ENCODE measurements at regions of chr18 and their contacts with region 1.

Region 1: DNA sequence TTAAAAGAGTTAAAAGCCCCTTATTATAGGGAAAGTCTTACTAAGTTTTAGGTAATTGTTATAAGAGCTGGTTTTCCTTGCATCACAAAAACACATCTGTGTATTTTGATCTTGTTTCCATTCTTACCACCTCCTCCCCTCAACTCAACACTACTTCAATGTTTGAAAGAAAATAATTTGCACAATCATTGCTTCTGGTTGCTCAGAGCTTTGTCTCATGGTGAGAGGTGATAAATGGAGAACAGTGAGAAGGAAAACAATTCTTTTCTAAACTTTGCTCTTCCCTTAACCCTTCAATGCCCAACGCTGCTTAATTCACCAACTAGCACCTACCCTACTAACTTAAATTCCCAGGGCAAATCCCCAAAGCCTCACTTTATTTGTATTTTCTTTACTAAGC is 268.1 kb upstream of the LINC00305 start:
- DNase-seq: no peak
- ATAC-seq: no peak
- H3K4me3 ChIP-seq: no peak overlapping the region
- H3K27ac ChIP-seq: no peak overlapping the region
- H3K4me1 ChIP-seq: no peaks in the 10 kb centered on the region
- H3K27me3 ChIP-seq: no peaks in the 10 kb centered on the region
- CTCF ChIP-seq: no peak

Region 2: GRCh38 chr18:64027931-64028695 is 388.9 kb before region 1 on chr18:
- intact Hi-C with region 1: loop called in 1 of 10 experiments (anchors 10 kb)
- DNase-seq: no peak
- ATAC-seq: peak in 6 of 8 donors; percentile 42 to 77 (median 70)
- H3K4me3 ChIP-seq: no peak overlapping the region
- H3K27ac ChIP-seq: peak overlapping the region in 1 of 10 donors; percentile 25
- H3K4me1 ChIP-seq: peaks cover 0 to 4% (median 0%) of the 10 kb centered on the region in 9 donors
- H3K27me3 ChIP-seq: peaks cover 0 to 9% (median 0%) of the 10 kb centered on the region in 7 donors
- CTCF ChIP-seq: no peak

Region 3: GRCh38 chr18:64100116-64100922 is 316.7 kb before region 1 on chr18:
- intact Hi-C with region 1: loop called in 1 of 10 experiments (anchors 10 kb)
- DNase-seq: no peak
- ATAC-seq: no peak
- H3K4me3 ChIP-seq: no peak overlapping the region
- H3K27ac ChIP-seq: no peak overlapping the region
- H3K4me1 ChIP-seq: no peaks in the 10 kb centered on the region
- H3K27me3 ChIP-seq: peaks cover 0 to 4% (median 0%) of the 10 kb centered on the region in 7 donors
- CTCF ChIP-seq: no peak

Region 4: GRCh38 chr18:64119916-64120315 is 297.1 kb before region 1 on chr18:
- intact Hi-C with region 1: loop called in 1 of 10 experiments (anchors 10 kb)
- DNase-seq: no peak
- ATAC-seq: no peak
- H3K4me3 ChIP-seq: no peak overlapping the region
- H3K27ac ChIP-seq: no peak overlapping the region
- H3K4me1 ChIP-seq: no peaks in the 10 kb centered on the region
- H3K27me3 ChIP-seq: no peaks in the 10 kb centered on the region
- CTCF ChIP-seq: peak in 5 of 9 donors; percentile 13 to 39 (median 20)

Region 5: DNA sequence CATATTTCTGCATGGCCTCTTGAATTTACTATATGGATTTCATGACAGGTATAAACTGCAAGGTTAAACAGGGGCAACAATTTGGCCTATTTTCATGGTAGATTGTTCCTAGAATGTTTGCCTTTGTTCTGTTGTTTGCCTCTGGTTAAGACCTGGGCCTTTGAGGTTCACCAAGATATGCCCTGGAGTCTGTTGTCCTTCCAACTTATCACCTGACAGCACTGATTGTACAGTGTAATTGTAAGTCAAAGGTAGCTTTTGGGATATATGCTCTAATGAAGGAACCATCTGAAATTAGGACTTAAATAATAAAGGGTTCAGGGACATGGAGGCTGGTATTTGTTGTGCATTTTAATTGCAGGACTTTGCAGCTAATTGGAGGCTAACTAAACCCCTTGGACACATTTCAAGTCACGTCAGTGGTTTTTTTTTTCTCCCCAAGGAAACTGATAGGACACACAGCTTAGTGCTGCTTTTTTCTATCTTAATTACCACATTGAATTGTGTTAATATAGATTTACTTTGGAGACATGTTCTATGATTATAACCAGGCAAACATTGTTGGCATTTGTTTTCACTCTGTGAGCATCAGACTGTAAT is 503.1 kb after region 1 on chr18:
- intact Hi-C with region 1: no loop called
- DNase-seq: no peak
- ATAC-seq: peak in 1 of 8 donors; percentile 51
- H3K4me3 ChIP-seq: no peak overlapping the region
- H3K27ac ChIP-seq: no peak overlapping the region
- H3K4me1 ChIP-seq: peaks cover 0 to 12% (median 0%) of the 10 kb centered on the region in 9 donors
- H3K27me3 ChIP-seq: no peaks in the 10 kb centered on the region
- CTCF ChIP-seq: no peak